CD4-positive, alpha-beta T cell (primary cell): ENCODE measurements at regions of chr1 and their contacts with region 1.

Region 1: DNA sequence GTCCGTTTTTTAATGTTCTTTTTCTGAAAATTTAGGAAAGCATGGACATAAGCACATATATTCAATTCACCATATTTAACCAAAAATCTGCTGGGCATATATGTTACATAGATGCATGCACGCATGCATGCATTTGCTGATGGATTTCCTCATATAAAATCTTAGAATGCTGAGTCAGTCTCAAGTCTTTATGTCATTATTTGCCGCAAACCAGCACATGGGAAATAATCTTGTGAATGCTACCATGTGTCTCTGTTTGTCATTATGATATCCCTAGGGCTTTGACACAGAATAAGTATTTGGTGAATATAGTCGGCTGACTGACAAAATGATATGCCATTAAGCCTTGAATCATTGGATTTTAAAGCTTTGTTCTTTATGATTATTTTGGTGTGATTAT is 776.5 kb downstream of the KCNT2 start:
- DNase-seq: no peak
- ATAC-seq: no peak
- H3K4me3 ChIP-seq: no peak overlapping the region
- H3K4me3 Mint-ChIP-seq: no peak overlapping the region
- H3K27ac ChIP-seq: no peak overlapping the region
- H3K27ac Mint-ChIP-seq: no peak overlapping the region
- H3K4me1 ChIP-seq: no peaks in the 10 kb centered on the region
- H3K4me1 Mint-ChIP-seq: no peaks in the 10 kb centered on the region
- H3K27me3 ChIP-seq: no peaks in the 10 kb centered on the region
- H3K27me3 Mint-ChIP-seq: no peaks in the 10 kb centered on the region
- CTCF ChIP-seq: no peak

Region 2: DNA sequence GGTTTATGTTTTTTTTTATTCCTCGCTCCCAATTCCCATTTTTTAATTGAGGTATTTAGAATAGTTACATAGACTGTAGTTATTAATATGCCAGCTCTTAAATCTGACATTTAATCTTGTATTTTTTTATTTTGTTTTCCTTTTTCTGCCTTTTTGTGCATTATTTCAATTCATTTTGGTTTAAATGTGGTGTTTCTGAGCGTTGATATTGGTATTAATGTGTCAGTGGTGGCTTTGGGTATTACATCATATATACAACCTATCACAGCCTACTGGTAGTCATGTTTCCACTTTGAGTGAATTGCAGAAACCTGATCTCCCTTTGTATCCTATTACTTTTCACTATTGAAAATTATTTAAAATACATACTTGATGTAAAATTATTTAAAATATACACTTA is 250.8 kb before region 1 on chr1:
- CTCF ChIA-PET with region 1: no interaction called
- POLR2A ChIA-PET with region 1: no interaction called
- intact Hi-C with region 1: loop called in 1 of 2 experiments (anchors 10 kb)
- DNase-seq: no peak
- ATAC-seq: no peak
- H3K4me3 ChIP-seq: no peak overlapping the region
- H3K4me3 Mint-ChIP-seq: no peak overlapping the region
- H3K27ac ChIP-seq: no peak overlapping the region
- H3K27ac Mint-ChIP-seq: no peak overlapping the region
- H3K4me1 ChIP-seq: no peaks in the 10 kb centered on the region
- H3K4me1 Mint-ChIP-seq: no peaks in the 10 kb centered on the region
- H3K27me3 ChIP-seq: no peaks in the 10 kb centered on the region
- H3K27me3 Mint-ChIP-seq: no peaks in the 10 kb centered on the region
- CTCF ChIP-seq: no peak

Region 3: GRCh38 chr1:195763141-195763698 is 68.6 kb before region 1 on chr1:
- CTCF ChIA-PET with region 1: no interaction called
- POLR2A ChIA-PET with region 1: no interaction called
- intact Hi-C with region 1: loop called in 1 of 2 experiments (anchors 10 kb)
- DNase-seq: peak in 1 of 14 experiments; percentile 8
- ATAC-seq: no peak
- H3K4me3 ChIP-seq: no peak overlapping the region
- H3K4me3 Mint-ChIP-seq: no peak overlapping the region
- H3K27ac ChIP-seq: no peak overlapping the region
- H3K27ac Mint-ChIP-seq: no peak overlapping the region
- H3K4me1 ChIP-seq: no peaks in the 10 kb centered on the region
- H3K4me1 Mint-ChIP-seq: no peaks in the 10 kb centered on the region
- H3K27me3 ChIP-seq: no peaks in the 10 kb centered on the region
- H3K27me3 Mint-ChIP-seq: no peaks in the 10 kb centered on the region
- CTCF ChIP-seq: no peak